ENCODE measurements at regions of chr15 and their contacts with region 1.

Region 1: GRCh38 chr15:35690698-35691116 is 144.7 kb upstream of the DPH6 start:
- DNase-seq: no peak

Region 2: GRCh38 chr15:35545824-35546510 is 144.7 kb before region 1 on chr15 and contains the start of gene DPH6:
- intact Hi-C with region 1: loop called (anchors 5 kb)
- DNase-seq: peak; percentile 92
- total RNA-seq, gene DPH6: 19.7 TPM

Region 3: DNA sequence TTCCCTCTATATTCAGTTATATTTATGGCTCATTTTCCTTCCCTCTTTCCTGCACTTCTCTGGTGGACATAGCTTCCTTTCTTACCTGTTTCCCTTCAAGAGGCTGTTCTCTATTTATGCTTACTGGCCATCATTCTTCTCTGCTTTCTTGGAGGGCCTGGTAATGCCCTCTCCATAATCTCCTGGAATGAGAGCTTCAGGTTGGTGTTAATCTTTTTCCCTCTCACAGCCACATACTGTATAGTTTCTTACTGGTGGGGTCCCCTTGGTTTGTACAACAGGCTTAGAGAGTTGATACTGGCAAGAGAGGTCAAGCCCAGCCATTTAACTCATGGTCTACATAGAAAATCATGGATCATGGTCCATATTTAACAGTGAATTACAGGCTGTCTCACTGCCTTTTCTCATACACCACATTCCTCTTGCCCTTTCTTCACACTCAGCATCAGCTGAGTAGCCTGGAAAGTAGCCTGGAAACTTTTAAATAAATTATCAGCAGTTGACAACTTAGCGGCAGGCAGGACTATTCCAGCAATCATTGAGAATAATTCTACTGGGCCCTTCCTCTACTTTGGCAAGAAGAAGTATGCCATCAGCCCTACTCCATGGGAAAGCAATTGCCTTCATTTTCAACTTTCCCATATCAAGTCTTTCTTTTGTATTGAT is 106.7 kb before region 1 on chr15:
- intact Hi-C with region 1: loop called (anchors 2 kb)
- DNase-seq: no peak

Region 4: DNA sequence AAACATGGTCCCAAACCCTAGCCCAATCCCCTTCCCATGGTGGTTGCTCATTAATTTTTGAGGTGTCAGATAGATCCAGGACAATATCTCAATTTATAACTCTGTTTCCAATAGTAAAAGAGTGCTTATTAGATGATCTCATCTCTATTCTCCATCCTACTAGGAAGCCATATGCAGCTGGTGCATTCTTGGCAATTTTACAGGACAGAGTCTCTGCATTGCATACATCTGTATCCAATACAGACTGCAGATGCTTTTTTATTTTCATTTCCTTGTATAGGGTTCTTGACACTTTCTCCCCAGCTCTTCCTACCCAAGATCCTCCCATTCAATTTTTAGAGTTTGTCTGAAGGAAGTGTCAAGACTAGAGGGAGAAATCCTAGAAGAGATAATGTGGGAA is 50.1 kb after region 1 on chr15:
- intact Hi-C with region 1: no loop called
- DNase-seq: no peak